ENCODE measurements at regions of chr10 and their contacts with region 1.

Region 1: DNA sequence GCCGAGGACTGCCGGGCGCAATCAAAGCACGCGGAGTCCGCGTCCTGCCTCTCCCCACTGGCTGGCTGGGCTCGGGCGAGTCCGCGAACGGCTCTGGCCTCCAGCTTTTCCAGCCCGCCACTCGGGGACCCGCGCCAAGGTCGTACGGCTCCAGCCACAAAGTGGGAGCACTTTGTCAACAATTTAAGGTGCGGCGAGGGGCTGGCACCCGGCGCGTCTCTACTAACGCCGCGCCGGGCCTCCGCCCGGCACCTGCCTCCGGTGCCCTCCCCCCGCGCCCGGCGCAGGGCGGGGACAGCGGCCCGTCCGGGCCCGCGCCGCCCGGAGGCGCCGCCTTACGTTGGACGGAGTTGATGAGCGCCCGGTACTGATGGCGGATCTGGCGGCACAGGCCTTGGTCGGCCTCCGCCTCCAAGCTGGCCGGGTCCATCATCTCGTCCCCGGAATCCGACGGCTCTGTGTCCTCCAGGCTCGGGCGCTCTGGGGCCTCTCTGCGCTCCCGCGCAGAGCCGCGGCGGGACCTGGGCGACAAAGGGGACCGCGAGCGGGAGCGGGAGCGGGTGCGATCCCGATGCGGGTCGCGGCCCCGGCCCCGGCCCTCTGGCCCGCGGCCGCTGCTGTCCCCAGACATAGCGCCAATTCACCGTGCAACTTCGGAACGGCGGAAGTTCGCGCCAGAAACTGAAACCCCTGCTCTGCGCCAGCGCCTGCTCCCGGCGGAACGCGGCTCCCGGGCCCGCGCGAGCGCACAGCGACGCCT is at the start of gene NSMCE4A:
- DNase-seq: peak; percentile 75 to 84 (median 79)
- H3K4me3 ChIP-seq: peak within 1 kb of the TSS; percentile 35 to 97 (median 66)
- H3K27ac ChIP-seq: peak within 1 kb of the TSS; percentile 69 to 96 (median 94)
- H3K4me1 ChIP-seq: peaks cover 8 to 13% of the 10 kb centered on the region in 2 donors
- H3K27me3 ChIP-seq: no peaks in the 10 kb centered on the region
- CTCF ChIP-seq: peak in 4 of 6 experiments; percentile 42 to 62 (median 58)
- POLR2A ChIP-seq: peak in 1 of 2 donors; percentile 69
- total RNA-seq, gene NSMCE4A: 25.6 to 83.6 (median 39.0) TPM

Region 2: GRCh38 chr10:121927841-121928527 is 46.7 kb before region 1 on chr10 and contains the start of gene ATE1:
- intact Hi-C with region 1: loop called in 1 of 2 experiments (anchors 5 kb)
- DNase-seq: peak; percentile 88 to 94 (median 90)
- H3K4me3 ChIP-seq: peak within 1 kb of the TSS; percentile 88 to 99 (median 94)
- H3K27ac ChIP-seq: peak within 1 kb of the TSS; percentile 96 to 99 (median 98)
- H3K4me1 ChIP-seq: peaks cover 15 to 24% of the 10 kb centered on the region in 2 donors
- H3K27me3 ChIP-seq: no peaks in the 10 kb centered on the region
- CTCF ChIP-seq: no peak
- POLR2A ChIP-seq: peak; percentile 61 to 84
- total RNA-seq, gene ATE1: 25.6 to 53.7 (median 37.4) TPM